MCF 10A (cell line): ENCODE measurements at regions of chr15 and their contacts with region 1.

Region 1: DNA sequence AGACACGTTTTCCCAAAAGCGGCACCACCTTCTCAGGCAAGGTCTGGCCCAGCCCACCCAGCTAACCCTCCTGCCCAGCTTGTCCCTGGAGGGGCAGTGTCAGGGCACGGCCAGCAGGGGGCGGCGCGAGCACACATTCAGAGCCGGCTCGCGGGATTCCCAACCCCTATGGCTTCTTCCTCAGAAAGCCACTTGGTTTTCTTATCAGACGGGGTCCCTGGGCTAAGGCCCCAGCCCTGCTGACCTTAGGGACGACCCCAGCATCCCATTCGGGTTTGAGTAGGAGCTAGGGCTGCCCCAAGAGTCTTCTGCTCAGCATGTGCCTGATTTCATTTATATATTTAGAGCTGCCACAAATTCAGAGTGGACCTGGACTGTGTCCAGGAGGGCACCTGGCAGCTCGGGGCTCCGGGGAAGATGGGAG is 14.5 kb downstream of the RLBP1 start:
- DNase-seq: peak; percentile 80
- H3K4me3 Mint-ChIP-seq: peak overlapping the region; percentile 38
- H3K27ac Mint-ChIP-seq: no peak overlapping the region
- H3K4me1 Mint-ChIP-seq: no peaks in the 10 kb centered on the region
- H3K27me3 Mint-ChIP-seq: no peaks in the 10 kb centered on the region
- CTCF ChIP-seq: peak; percentile 95

Region 2: DNA sequence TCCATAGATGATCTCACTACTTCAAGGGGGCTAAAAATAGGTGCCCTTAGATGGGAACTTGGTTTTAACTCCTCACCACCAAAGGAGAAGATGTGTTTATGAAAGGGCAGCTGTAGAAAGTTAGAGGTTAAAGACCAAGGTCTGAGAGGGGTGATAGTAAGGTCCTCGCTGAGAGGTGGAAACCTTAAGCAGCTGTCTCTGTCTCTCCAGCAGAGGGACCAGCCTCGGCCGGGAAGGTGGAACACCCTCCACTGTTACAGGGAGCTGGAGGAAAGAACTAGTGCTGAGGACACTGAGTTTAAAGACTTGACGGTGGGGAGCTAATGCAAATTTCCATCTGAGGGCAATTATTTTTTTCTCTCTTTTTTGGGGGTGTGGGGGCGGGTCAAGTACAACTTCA is 23.4 kb after region 1 on chr15:
- CTCF ChIA-PET with region 1: interaction called, 11 read pairs
- POLR2A ChIA-PET with region 1: no interaction called
- intact Hi-C with region 1: no loop called
- DNase-seq: no peak
- H3K4me3 Mint-ChIP-seq: no peak overlapping the region
- H3K27ac Mint-ChIP-seq: no peak overlapping the region
- H3K4me1 Mint-ChIP-seq: peaks cover 5% of the 10 kb centered on the region
- H3K27me3 Mint-ChIP-seq: peaks cover 12% of the 10 kb centered on the region
- CTCF ChIP-seq: no peak

Region 3: GRCh38 chr15:89278307-89278706 is 71.4 kb after region 1 on chr15:
- CTCF ChIA-PET with region 1: interaction called, 13 read pairs
- POLR2A ChIA-PET with region 1: no interaction called
- intact Hi-C with region 1: no loop called
- DNase-seq: no peak
- H3K4me3 Mint-ChIP-seq: no peak overlapping the region
- H3K27ac Mint-ChIP-seq: no peak overlapping the region
- H3K4me1 Mint-ChIP-seq: no peaks in the 10 kb centered on the region
- H3K27me3 Mint-ChIP-seq: no peaks in the 10 kb centered on the region
- CTCF ChIP-seq: no peak

Region 4: DNA sequence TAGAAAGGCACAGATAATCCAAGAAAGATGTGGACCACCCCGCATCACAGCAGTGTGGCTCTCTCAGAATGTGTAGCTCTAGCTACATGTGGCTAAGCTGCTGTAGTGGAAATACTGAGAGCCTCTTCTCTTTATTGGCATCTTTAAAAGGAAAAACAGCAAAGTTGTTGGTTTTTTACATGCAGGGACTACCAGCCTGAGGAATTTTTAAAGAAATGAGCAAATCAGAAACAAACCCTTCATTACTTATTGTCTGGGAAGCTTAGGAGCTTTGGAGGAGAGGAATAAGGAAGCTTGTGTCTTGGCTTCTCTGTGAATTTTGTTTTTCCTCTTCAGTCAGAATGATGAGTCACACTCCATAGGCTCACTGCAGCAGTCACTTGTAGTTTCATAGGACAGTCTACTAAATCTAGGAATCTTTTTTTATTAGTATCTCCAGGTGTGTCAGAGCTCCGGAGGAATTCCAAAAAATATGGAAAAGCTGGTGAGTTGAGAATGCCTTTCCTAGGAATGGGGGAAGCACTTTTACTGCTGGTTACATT is 100.2 kb after region 1 on chr15:
- CTCF ChIA-PET with region 1: interaction called, 78 read pairs
- POLR2A ChIA-PET with region 1: interaction called, 3 read pairs
- intact Hi-C with region 1: no loop called
- DNase-seq: peak; percentile 13
- H3K4me3 Mint-ChIP-seq: no peak overlapping the region
- H3K27ac Mint-ChIP-seq: peak overlapping the region; percentile 81
- H3K4me1 Mint-ChIP-seq: peaks cover 7% of the 10 kb centered on the region
- H3K27me3 Mint-ChIP-seq: no peaks in the 10 kb centered on the region
- CTCF ChIP-seq: no peak